Breast epithelium (tissue), 4 donors: ENCODE measurements at regions of chr1 and their contacts with region 1.

Region 1: GRCh38 chr1:173364827-173365226 is 112.3 kb upstream of the PRDX6 start:
- DNase-seq: no peak
- H3K4me3 ChIP-seq: no peak overlapping the region
- H3K27ac ChIP-seq: no peak overlapping the region
- H3K4me1 ChIP-seq: no peaks in the 10 kb centered on the region
- H3K27me3 ChIP-seq: no peaks in the 10 kb centered on the region
- CTCF ChIP-seq: no peak
- POLR2A ChIP-seq: no peak

Region 2: GRCh38 chr1:172144445-172145061 is 1220.3 kb before region 1 on chr1:
- intact Hi-C with region 1: loop called (anchors 5 kb)
- DNase-seq: peak in 1 of 2 donors; percentile 39
- H3K4me3 ChIP-seq: peak overlapping the region; percentile 49 to 69 (median 57)
- H3K27ac ChIP-seq: peak overlapping the region; percentile 70 to 90
- H3K4me1 ChIP-seq: no peaks in the 10 kb centered on the region
- H3K27me3 ChIP-seq: no peaks in the 10 kb centered on the region
- CTCF ChIP-seq: no peak
- POLR2A ChIP-seq: peak; percentile 31

Region 3: GRCh38 chr1:173429471-173430402 is 64.9 kb after region 1 on chr1:
- intact Hi-C with region 1: no loop called
- DNase-seq: peak; percentile 54 to 60
- H3K4me3 ChIP-seq: peak overlapping the region; percentile 14 to 41 (median 25)
- H3K27ac ChIP-seq: peak overlapping the region; percentile 69 to 82
- H3K4me1 ChIP-seq: no peaks in the 10 kb centered on the region
- H3K27me3 ChIP-seq: no peaks in the 10 kb centered on the region
- CTCF ChIP-seq: peak in 2 of 3 donors; percentile 26 to 36
- POLR2A ChIP-seq: no peak